K562 (cell line): ENCODE measurements at regions of chr5 and their contacts with region 1.

Region 1: GRCh38 chr5:118956727-118957126 is 31.6 kb downstream of the DTWD2 start:
- DNase-seq: peak in 1 of 4 experiments; percentile 11
- ATAC-seq: no peak
- H3K4me3 ChIP-seq: no peak overlapping the region
- H3K27ac ChIP-seq: no peak overlapping the region
- H3K4me1 ChIP-seq: no peaks in the 10 kb centered on the region; a peak in 1 of 5 replicates
- H3K27me3 ChIP-seq: no peaks in the 10 kb centered on the region
- CTCF ChIP-seq: peak in 2 of 3 experiments; percentile 23 to 67; a peak in 3 of 6 replicates
- EP300 ChIP-seq: no peak
- POLR2A ChIP-seq: no peak
- RAD21 ChIP-seq: peak; percentile 77 to 87

Region 2: DNA sequence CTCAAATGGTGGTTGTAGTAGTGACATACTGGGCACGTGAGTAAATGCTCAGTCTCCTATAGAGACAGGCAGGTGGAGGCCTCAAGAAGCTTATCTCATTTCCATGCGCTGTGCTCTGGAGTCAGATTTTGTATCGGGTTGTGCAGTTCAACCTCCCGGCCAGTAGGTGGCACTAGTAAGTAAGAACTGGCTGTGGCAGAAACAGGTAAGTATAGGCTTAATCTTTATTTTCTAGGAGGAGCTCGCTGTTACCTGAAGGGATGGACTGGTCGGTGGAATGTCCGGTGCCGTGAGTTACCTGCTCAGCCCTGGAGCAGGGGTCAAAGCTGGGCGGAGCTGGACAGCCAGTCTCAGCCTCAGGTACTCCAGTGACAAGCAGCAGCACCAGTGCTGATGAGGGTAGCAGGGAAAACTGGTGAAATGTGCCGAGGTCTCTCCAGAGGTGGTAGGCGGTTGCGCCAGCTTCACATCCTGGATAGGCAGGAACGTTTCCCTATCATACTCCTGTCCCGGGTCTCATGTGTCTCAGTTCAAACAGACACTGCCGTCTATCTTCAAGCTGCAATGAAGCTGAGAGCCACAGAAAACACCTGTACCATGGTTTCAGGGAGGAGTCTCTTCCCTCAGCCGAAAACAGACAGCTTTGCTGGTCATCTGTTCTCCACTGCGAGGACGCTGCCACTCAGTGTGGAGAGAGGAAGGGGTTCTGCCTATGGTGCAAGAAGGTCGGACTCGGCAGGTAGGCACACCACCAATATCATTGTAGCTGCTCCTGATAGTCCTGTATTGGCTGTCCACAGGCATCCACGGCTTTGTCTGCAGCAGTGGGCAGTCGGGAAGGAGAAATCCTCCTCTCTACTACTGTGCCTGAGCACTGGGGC is 1501.8 kb before region 1 on chr5:
- CTCF ChIA-PET with region 1: no interaction called
- POLR2A ChIA-PET with region 1: no interaction called
- in situ Hi-C with region 1: no loop called
- intact Hi-C with region 1: loop called (anchors 5 kb)
- DNase-seq: peak; percentile 29 to 51 (median 38)
- ATAC-seq: peak; percentile 68
- H3K4me3 ChIP-seq: no peak overlapping the region
- H3K27ac ChIP-seq: no peak overlapping the region
- H3K4me1 ChIP-seq: no peaks in the 10 kb centered on the region
- H3K27me3 ChIP-seq: no peaks in the 10 kb centered on the region
- CTCF ChIP-seq: peak; percentile 38 to 70 (median 57); a peak in 5 of 6 replicates
- EP300 ChIP-seq: no peak
- POLR2A ChIP-seq: no peak
- RAD21 ChIP-seq: peak; percentile 22 to 37; a peak in 1 of 4 replicates

Region 3: GRCh38 chr5:118791926-118792734 is 164.6 kb before region 1 on chr5:
- CTCF ChIA-PET with region 1: no interaction called
- POLR2A ChIA-PET with region 1: no interaction called
- in situ Hi-C with region 1: no loop called
- intact Hi-C with region 1: loop called (anchors 5 kb)
- DNase-seq: peak; percentile 44 to 62 (median 50)
- ATAC-seq: peak; percentile 95
- H3K4me3 ChIP-seq: no peak overlapping the region
- H3K27ac ChIP-seq: no peak overlapping the region
- H3K4me1 ChIP-seq: no peaks in the 10 kb centered on the region
- H3K27me3 ChIP-seq: no peaks in the 10 kb centered on the region
- CTCF ChIP-seq: peak; percentile 53 to 80 (median 76)
- EP300 ChIP-seq: no peak
- POLR2A ChIP-seq: no peak
- RAD21 ChIP-seq: peak; percentile 71 to 83